ENCODE measurements at regions of chr7 and their contacts with region 1.

Region 1: GRCh38 chr7:129825496-129826267 is 127.1 kb downstream of the UBE2H start:
- DNase-seq: peak; percentile 91
- H3K4me3 ChIP-seq: peak overlapping the region; percentile 44 to 76 (median 60)
- H3K27ac ChIP-seq: peak overlapping the region; percentile 55 to 80 (median 64)
- H3K4me1 ChIP-seq: peaks cover 0 to 31% (median 23%) of the 10 kb centered on the region in 4 donors
- H3K27me3 ChIP-seq: no peaks in the 10 kb centered on the region
- CTCF ChIP-seq: peak in 3 of 4 experiments; percentile 45 to 100 (median 68)
- EP300 ChIP-seq: no peak
- POLR2A ChIP-seq: no peak

Region 2: DNA sequence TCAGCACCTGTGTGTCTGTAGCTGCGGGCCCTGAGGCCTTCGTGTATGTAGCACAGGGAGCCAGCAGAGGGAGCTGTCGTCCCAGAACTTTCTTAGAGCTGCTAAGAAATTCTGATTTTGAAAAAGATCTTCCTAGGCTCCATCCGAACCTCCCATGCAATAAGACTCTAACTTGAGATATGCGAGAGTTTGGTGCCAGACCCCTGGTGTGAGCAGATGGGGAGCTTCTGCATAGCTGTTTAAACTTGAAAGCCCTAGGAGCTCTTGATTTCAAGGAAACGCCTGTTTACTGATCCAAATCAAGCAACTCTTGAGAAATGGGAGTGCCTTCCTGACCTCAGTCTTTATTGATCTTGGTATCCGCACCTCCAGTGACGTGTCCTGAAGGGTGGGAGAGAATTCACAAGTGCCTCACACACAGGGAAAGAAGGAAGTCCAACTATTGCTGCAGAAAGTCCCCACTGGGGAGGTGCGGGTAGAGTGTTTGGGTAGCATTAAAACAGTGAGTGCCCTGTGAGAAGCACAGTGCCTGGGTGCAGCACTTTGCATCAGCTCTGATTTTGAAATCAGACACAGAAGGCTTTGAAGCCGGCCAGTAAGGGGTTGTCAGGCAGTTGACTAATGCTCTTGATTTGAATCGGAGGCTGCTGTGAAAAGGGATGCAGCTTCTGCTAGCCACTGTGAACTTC is 457.8 kb before region 1 on chr7:
- intact Hi-C with region 1: loop called (anchors 10 kb)
- DNase-seq: peak; percentile 82
- H3K4me3 ChIP-seq: peak overlapping the region in 2 of 4 donors; percentile 8 to 11
- H3K27ac ChIP-seq: peak overlapping the region in 1 of 4 donors; percentile 10
- H3K4me1 ChIP-seq: peaks cover 0 to 3% (median 0%) of the 10 kb centered on the region in 4 donors
- H3K27me3 ChIP-seq: no peaks in the 10 kb centered on the region
- CTCF ChIP-seq: peak in 3 of 4 experiments; percentile 66 to 79 (median 78)
- EP300 ChIP-seq: no peak
- POLR2A ChIP-seq: peak in 1 of 2 donors; percentile 80

Region 3: GRCh38 chr7:129611246-129612111 is 214.2 kb before region 1 on chr7 and contains the start of gene NRF1:
- intact Hi-C with region 1: loop called (anchors 5 kb)
- DNase-seq: peak; percentile 92
- H3K4me3 ChIP-seq: peak within 1 kb of the TSS; percentile 73 to 83 (median 74)
- H3K27ac ChIP-seq: peak within 1 kb of the TSS; percentile 93 to 96 (median 94)
- H3K4me1 ChIP-seq: peaks cover 0 to 50% (median 34%) of the 10 kb centered on the region in 4 donors
- H3K27me3 ChIP-seq: no peaks in the 10 kb centered on the region
- CTCF ChIP-seq: no peak
- EP300 ChIP-seq: no peak
- POLR2A ChIP-seq: no peak
- total RNA-seq, gene NRF1: 15.0 to 18.1 (median 17.2) TPM

Region 4: DNA sequence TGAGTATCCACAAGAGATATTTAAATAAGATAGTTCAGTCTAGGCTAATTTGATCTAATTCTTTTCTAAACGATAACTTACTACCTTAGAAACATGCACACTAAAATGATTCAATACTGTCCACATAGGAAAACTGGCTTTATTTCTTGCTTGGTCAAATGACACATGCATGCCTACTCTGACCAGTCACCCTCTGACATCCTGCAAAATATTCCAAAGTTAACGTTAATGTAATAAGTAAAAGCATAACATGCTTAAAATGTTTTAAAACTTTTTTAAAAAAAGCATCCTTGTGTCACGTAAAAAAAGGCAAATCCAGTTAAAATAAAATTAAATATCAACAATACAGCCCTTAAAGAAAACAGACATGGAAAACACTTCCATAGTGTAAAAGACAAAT is 56.8 kb after region 1 on chr7:
- intact Hi-C with region 1: no loop called
- DNase-seq: no peak
- H3K4me3 ChIP-seq: no peak overlapping the region
- H3K27ac ChIP-seq: no peak overlapping the region
- H3K4me1 ChIP-seq: peaks cover 0 to 25% (median 16%) of the 10 kb centered on the region in 4 donors
- H3K27me3 ChIP-seq: no peaks in the 10 kb centered on the region
- CTCF ChIP-seq: no peak
- EP300 ChIP-seq: no peak
- POLR2A ChIP-seq: no peak

Region 5: DNA sequence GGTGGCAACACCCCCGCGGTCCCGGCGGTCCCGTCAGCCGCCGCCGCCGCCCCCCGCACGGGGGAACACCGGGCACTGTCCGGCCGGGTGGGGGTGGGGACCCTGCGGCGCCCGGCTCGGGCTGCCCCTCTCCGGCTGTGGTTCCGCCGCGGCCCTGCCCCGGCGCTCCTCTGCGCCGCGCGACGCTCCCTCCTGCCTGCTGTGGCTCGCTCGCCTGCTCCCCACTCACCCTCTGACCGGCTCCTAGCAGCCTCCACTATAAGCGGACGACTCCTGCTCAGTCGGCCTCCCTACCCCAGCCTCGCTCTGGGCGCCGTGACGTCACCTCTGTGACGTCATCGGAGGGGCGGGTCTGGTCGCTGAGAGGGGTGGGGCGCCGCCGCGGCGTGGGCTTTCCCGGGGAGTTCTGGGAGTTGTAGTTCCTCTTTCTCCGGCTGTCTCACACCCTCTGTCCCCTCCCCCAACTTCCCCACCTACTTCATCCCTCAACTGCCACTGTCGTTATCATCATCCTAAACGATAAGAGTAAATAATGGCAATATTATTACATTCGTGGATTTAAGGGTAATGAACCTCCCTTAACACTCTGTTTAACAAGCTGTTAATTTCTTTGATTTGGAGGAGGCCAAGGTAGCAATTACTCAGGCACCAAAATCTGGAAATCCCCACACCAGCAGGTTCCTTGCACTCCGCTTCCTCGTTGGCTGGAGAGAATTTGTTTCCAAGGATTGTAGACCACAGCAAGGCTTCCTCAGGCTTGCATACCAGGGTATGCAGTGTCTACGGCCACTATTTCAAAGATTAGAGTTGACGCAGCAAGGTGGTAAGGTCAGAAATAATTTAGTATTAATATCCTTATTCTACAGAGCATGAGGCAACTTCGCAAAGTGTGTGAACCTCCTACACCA is 127.2 kb after region 1 on chr7 and contains the start of gene UBE2H:
- intact Hi-C with region 1: loop called (anchors 2 kb)
- DNase-seq: peak; percentile 96
- H3K4me3 ChIP-seq: peak within 1 kb of the TSS; percentile 86 to 98 (median 92)
- H3K27ac ChIP-seq: peak within 1 kb of the TSS; percentile 96 to 97 (median 96)
- H3K4me1 ChIP-seq: peaks cover 0 to 27% (median 20%) of the 10 kb centered on the region in 4 donors
- H3K27me3 ChIP-seq: no peaks in the 10 kb centered on the region
- CTCF ChIP-seq: no peak
- EP300 ChIP-seq: no peak
- POLR2A ChIP-seq: peak; percentile 91 to 92
- total RNA-seq, gene UBE2H: 68.8 to 99.7 (median 79.1) TPM

Region 6: DNA sequence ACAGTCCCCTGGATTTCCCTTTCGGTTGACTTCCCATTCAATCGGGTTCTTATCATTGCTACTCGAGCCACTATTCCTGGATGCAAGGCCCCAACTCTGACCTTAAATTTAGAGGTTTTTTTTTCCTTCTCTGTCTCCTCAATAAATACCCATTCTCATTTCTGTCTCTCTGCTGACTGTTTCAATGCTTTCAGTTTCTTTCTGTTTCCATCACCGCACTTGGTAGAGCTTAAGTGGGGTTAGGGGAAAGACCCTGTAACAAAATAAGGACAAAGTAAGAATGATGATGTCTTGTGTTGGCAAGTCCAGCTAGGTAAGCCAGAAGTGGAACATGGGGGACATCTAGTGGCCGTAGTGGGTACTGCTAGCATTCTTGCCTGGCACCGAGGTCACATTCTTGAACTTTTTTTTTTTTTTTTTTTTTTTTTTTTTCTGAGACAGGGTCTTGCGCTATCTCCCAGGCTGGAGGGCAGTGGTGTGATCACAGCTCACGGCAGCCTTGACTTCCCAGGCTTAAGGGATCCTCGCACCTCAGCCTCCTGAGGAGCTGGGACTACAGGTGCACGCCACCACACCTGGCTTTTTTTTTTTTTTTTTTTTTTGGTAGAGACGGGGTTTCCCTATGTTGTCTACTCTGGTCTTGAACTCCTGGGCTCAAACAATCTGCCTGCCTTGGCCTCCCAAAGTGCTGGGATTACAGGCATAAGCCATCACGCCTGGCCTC is 185.2 kb after region 1 on chr7:
- intact Hi-C with region 1: loop called (anchors 1 kb)
- DNase-seq: peak; percentile 86
- H3K4me3 ChIP-seq: no peak overlapping the region
- H3K27ac ChIP-seq: peak overlapping the region in 2 of 4 donors; percentile 3 to 39
- H3K4me1 ChIP-seq: no peaks in the 10 kb centered on the region
- H3K27me3 ChIP-seq: no peaks in the 10 kb centered on the region
- CTCF ChIP-seq: peak; percentile 72 to 92 (median 90)
- EP300 ChIP-seq: no peak
- POLR2A ChIP-seq: no peak

Region 7: GRCh38 chr7:130141161-130141883 is 315.6 kb after region 1 on chr7:
- intact Hi-C with region 1: no loop called
- DNase-seq: peak; percentile 80
- H3K4me3 ChIP-seq: peak overlapping the region; percentile 50 to 77 (median 54)
- H3K27ac ChIP-seq: peak overlapping the region; percentile 53 to 76 (median 65)
- H3K4me1 ChIP-seq: peaks cover 0 to 19% (median 15%) of the 10 kb centered on the region in 4 donors
- H3K27me3 ChIP-seq: no peaks in the 10 kb centered on the region
- CTCF ChIP-seq: no peak
- EP300 ChIP-seq: peak in 1 of 4 donors; percentile 29
- POLR2A ChIP-seq: no peak

Measured in sigmoid colon (tissue), 7 donors.